ENCODE measurements at regions of chrX and their contacts with region 1.

Region 1: DNA sequence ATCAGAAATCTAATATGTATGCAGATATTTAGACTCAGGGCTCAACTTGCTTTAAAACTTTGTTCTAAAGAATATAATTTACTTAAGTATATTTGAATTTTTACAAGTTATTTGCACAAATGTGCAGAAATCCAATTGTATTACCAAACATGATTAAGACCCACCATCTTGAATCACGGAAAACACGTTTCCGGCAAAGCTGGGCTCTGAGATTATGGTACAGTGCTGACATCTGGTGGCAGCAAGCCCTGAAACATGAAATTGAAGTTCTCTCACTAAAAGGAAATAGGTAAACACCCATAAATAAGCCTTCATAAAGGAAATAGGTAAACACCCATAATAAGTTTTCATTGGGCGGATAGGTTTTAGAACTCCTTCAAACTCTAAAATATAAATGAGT is 98.3 kb upstream of the MAOA start:
- DNase-seq: peak; percentile 74
- ATAC-seq: no peak
- H3K4me3 Mint-ChIP-seq: no peak overlapping the region
- H3K27ac Mint-ChIP-seq: no peak overlapping the region
- H3K4me1 Mint-ChIP-seq: peaks cover 3% of the 10 kb centered on the region
- H3K27me3 Mint-ChIP-seq: no peaks in the 10 kb centered on the region
- CTCF ChIP-seq: peak; percentile 56

Region 2: DNA sequence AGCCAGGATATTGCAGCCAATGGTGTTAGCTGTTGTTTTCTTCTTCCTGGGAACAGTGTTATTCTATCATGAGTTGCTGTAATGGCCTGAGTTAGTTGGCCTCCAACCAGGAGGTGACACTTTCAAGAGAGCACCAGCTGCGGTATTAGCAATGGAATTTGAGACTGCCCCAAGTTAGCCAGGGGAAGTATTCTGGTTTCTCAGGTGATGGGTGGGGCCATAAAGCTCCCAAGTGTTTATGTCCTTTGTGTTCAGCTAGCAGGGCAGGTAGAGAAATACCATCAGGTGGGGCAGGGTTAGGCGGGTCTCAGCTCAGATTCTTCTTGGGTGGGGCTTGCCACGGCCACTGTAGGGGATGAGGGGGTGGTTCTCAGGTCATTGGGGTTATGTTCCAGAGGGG is 230.8 kb before region 1 on chrX:
- CTCF ChIA-PET with region 1: no interaction called
- POLR2A ChIA-PET with region 1: no interaction called
- intact Hi-C with region 1: no loop called
- DNase-seq: no peak
- ATAC-seq: no peak
- H3K4me3 Mint-ChIP-seq: no peak overlapping the region
- H3K27ac Mint-ChIP-seq: no peak overlapping the region
- H3K4me1 Mint-ChIP-seq: no peaks in the 10 kb centered on the region
- H3K27me3 Mint-ChIP-seq: no peaks in the 10 kb centered on the region
- CTCF ChIP-seq: no peak

Region 3: DNA sequence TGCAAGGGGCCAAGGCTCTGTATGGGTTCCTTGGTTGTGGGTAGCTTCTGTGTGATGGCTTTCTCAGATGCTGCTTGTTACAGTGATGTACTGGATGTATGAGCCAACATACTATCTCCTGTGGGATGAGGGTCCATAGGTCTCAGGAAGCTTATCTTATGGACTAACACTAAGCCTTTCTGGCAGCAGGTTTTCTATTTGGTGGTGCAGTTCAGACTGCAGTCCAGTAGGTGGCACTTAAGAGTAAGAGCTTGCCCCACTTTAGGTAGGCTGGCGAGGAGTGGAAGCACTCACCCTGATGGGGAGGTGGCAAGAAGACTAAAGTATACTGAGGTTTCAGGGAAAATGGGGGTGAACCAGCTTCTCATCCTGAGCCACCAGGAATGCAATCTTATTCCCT is 208.4 kb before region 1 on chrX:
- CTCF ChIA-PET with region 1: interaction called, 5 read pairs
- POLR2A ChIA-PET with region 1: no interaction called
- intact Hi-C with region 1: loop called (anchors 5 kb)
- DNase-seq: peak; percentile 35
- ATAC-seq: peak; percentile 53
- H3K4me3 Mint-ChIP-seq: no peak overlapping the region
- H3K27ac Mint-ChIP-seq: no peak overlapping the region
- H3K4me1 Mint-ChIP-seq: peaks cover 7% of the 10 kb centered on the region
- H3K27me3 Mint-ChIP-seq: no peaks in the 10 kb centered on the region
- CTCF ChIP-seq: peak; percentile 23

Region 4: GRCh38 chrX:43527801-43528200 is 30.0 kb before region 1 on chrX:
- CTCF ChIA-PET with region 1: no interaction called
- POLR2A ChIA-PET with region 1: no interaction called
- intact Hi-C with region 1: no loop called
- DNase-seq: no peak
- ATAC-seq: no peak
- H3K4me3 Mint-ChIP-seq: no peak overlapping the region
- H3K27ac Mint-ChIP-seq: no peak overlapping the region
- H3K4me1 Mint-ChIP-seq: peaks cover 6% of the 10 kb centered on the region
- H3K27me3 Mint-ChIP-seq: no peaks in the 10 kb centered on the region
- CTCF ChIP-seq: no peak

Region 5: DNA sequence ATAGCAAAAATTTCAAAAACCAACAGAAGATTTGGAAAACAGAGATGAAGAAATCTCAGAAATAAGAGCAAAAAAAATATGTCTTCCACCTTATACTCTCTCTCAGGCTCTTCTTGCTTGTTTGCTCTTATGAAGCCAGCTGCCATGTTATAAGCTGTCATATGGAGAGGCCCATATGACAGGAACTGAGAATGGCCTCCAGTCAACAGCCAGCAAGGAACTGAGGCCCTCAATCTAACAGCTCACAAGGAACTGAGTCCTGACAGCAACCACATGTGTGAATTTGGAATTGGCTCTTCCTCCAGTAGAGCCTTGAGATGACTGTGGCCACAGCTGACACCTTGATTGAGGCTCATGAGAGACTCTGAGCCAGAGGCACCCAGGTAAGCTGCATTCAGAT is 47.0 kb after region 1 on chrX:
- CTCF ChIA-PET with region 1: no interaction called
- POLR2A ChIA-PET with region 1: no interaction called
- intact Hi-C with region 1: no loop called
- DNase-seq: no peak
- ATAC-seq: no peak
- H3K4me3 Mint-ChIP-seq: no peak overlapping the region
- H3K27ac Mint-ChIP-seq: no peak overlapping the region
- H3K4me1 Mint-ChIP-seq: no peaks in the 10 kb centered on the region
- H3K27me3 Mint-ChIP-seq: no peaks in the 10 kb centered on the region
- CTCF ChIP-seq: no peak

Region 6: GRCh38 chrX:43750248-43750676 is 192.5 kb after region 1 on chrX:
- CTCF ChIA-PET with region 1: interaction called, 7 read pairs
- POLR2A ChIA-PET with region 1: no interaction called
- intact Hi-C with region 1: loop called (anchors 5 kb)
- DNase-seq: peak; percentile 46
- ATAC-seq: peak; percentile 60
- H3K4me3 Mint-ChIP-seq: no peak overlapping the region
- H3K27ac Mint-ChIP-seq: no peak overlapping the region
- H3K4me1 Mint-ChIP-seq: peaks cover 5% of the 10 kb centered on the region
- H3K27me3 Mint-ChIP-seq: no peaks in the 10 kb centered on the region
- CTCF ChIP-seq: peak; percentile 27

Measured in activated CD8-positive, alpha-beta T cell treated with anti-CD3 and anti-CD28 coated beads for 36 hours (primary cell).